Caco-2 (cell line): ENCODE measurements at regions of chr1 and their contacts with region 1.

Region 1: GRCh38 chr1:61453111-61453961 is 271.6 kb downstream of the TM2D1 start:
- DNase-seq: peak; percentile 76 to 77
- H3K4me3 ChIP-seq: no peak overlapping the region
- H3K4me3 Mint-ChIP-seq: no peak overlapping the region
- H3K27ac Mint-ChIP-seq: peak overlapping the region; percentile 42
- H3K4me1 ChIP-seq: peaks cover 32% of the 10 kb centered on the region
- H3K4me1 Mint-ChIP-seq: peaks cover 13% of the 10 kb centered on the region
- H3K27me3 ChIP-seq: no peaks in the 10 kb centered on the region
- H3K27me3 Mint-ChIP-seq: no peaks in the 10 kb centered on the region
- CTCF ChIP-seq: peak; percentile 56 to 77

Region 2: GRCh38 chr1:60969971-60970509 is 483.3 kb before region 1 on chr1:
- CTCF ChIA-PET with region 1: no interaction called
- POLR2A ChIA-PET with region 1: no interaction called
- intact Hi-C with region 1: loop called (anchors 2 kb)
- DNase-seq: no peak
- H3K4me3 ChIP-seq: no peak overlapping the region
- H3K4me3 Mint-ChIP-seq: no peak overlapping the region
- H3K27ac Mint-ChIP-seq: no peak overlapping the region
- H3K4me1 ChIP-seq: no peaks in the 10 kb centered on the region
- H3K4me1 Mint-ChIP-seq: no peaks in the 10 kb centered on the region
- H3K27me3 ChIP-seq: no peaks in the 10 kb centered on the region
- H3K27me3 Mint-ChIP-seq: peaks cover 9% of the 10 kb centered on the region
- CTCF ChIP-seq: no peak

Region 3: DNA sequence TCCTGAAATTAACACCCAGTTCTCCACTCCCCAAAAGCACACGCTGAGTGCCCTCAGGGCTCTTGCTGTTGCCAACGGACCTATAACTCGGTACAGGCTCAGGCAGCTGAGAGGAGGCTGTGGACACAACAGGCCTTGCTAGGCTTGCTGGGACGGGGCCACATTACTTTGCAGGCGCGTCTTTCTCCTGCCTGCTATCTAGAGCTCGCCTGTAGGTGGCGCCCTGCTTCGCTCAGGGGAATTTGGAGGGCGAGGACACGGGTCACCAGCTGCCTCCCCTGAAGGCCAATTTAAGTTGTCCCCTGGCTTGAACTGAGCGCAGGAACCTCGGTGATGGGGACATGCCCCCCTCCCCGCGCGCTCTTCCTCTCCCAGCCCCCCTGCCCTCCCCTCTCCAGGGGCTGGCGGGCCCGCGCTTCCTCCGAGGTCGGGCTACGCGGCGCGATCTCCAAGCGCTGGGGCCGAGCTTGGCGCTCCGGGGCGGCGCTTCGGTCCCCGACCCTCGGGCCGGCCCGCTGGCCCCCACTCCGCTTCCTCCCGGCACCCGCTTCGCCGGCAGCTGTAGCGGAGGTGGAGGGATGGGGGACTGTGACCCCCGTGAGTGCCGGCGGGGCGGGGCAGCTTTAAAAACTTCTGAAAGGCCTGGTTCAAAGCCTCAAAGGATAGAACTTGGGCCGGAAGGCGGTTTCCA is 403.3 kb before region 1 on chr1:
- CTCF ChIA-PET with region 1: interaction called, 6 read pairs
- POLR2A ChIA-PET with region 1: no interaction called
- intact Hi-C with region 1: loop called (anchors 2 kb)
- DNase-seq: peak; percentile 77 to 81
- H3K4me3 ChIP-seq: peak overlapping the region; percentile 40
- H3K4me3 Mint-ChIP-seq: peak overlapping the region; percentile 65
- H3K27ac Mint-ChIP-seq: no peak overlapping the region
- H3K4me1 ChIP-seq: no peaks in the 10 kb centered on the region
- H3K4me1 Mint-ChIP-seq: no peaks in the 10 kb centered on the region
- H3K27me3 ChIP-seq: no peaks in the 10 kb centered on the region
- H3K27me3 Mint-ChIP-seq: peaks cover 7% of the 10 kb centered on the region
- CTCF ChIP-seq: peak; percentile 77

Region 4: DNA sequence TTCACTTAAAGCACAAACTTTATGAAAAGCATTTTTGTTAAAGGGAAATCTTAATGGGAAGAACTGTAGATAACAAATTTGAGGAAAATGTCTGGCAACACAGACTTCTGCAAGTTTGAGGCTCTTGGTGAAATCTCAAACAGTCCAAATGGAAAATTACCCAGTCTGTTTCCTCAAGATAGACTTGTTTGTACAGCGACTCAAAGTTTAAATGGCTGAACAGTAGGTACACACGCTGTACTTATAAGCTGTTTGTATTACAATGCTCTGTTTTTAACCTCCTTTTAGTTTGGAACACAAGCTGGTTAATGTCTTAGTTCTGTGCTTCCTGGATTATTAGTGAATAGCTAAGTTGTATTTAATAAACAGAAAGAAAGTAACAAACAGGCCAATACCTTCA is 153.9 kb before region 1 on chr1:
- CTCF ChIA-PET with region 1: no interaction called
- POLR2A ChIA-PET with region 1: no interaction called
- intact Hi-C with region 1: loop called (anchors 5 kb)
- DNase-seq: peak in 1 of 2 experiments; percentile 2
- H3K4me3 ChIP-seq: no peak overlapping the region
- H3K4me3 Mint-ChIP-seq: no peak overlapping the region
- H3K27ac Mint-ChIP-seq: no peak overlapping the region
- H3K4me1 ChIP-seq: 0 out of 2 replicates have a peak, but pooled peaks cover 10% of the 10 kb centered on the region
- H3K4me1 Mint-ChIP-seq: no peaks in the 10 kb centered on the region
- H3K27me3 ChIP-seq: no peaks in the 10 kb centered on the region
- H3K27me3 Mint-ChIP-seq: no peaks in the 10 kb centered on the region
- CTCF ChIP-seq: no peak

Region 5: GRCh38 chr1:61337981-61338848 is 115.1 kb before region 1 on chr1:
- CTCF ChIA-PET with region 1: no interaction called
- POLR2A ChIA-PET with region 1: no interaction called
- intact Hi-C with region 1: loop called (anchors 1 kb)
- DNase-seq: peak; percentile 36 to 48
- H3K4me3 ChIP-seq: no peak overlapping the region
- H3K4me3 Mint-ChIP-seq: peak overlapping the region; percentile 50
- H3K27ac Mint-ChIP-seq: no peak overlapping the region
- H3K4me1 ChIP-seq: peaks cover 12% of the 10 kb centered on the region
- H3K4me1 Mint-ChIP-seq: peaks cover 8% of the 10 kb centered on the region
- H3K27me3 ChIP-seq: no peaks in the 10 kb centered on the region
- H3K27me3 Mint-ChIP-seq: no peaks in the 10 kb centered on the region
- CTCF ChIP-seq: peak; percentile 33 to 43

Region 6: GRCh38 chr1:61397935-61398334 is 55.4 kb before region 1 on chr1:
- CTCF ChIA-PET with region 1: no interaction called
- POLR2A ChIA-PET with region 1: no interaction called
- intact Hi-C with region 1: loop called (anchors 5 kb)
- DNase-seq: no peak
- H3K4me3 ChIP-seq: no peak overlapping the region
- H3K4me3 Mint-ChIP-seq: no peak overlapping the region
- H3K27ac Mint-ChIP-seq: no peak overlapping the region
- H3K4me1 ChIP-seq: no peaks in the 10 kb centered on the region
- H3K4me1 Mint-ChIP-seq: no peaks in the 10 kb centered on the region
- H3K27me3 ChIP-seq: no peaks in the 10 kb centered on the region
- H3K27me3 Mint-ChIP-seq: no peaks in the 10 kb centered on the region
- CTCF ChIP-seq: no peak

Region 7: DNA sequence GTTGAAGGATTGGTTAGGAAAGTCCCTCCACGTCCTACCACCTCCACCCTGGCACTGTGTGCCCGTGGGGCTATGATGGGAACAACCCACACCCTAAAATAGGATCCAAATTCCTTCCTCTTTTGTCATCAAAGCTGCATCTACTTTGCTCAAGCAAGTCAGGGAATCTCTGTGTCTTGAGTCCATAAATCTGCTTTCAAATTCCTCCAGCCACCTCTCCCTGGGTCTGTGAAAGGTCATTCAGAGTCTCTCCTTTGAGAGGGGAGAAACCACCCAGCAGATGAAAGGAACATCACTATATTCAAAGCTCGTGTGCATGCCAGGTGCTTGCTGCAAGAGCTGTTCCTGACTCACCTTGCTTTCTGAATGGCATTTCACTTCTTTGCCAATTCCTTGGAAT is 28.0 kb after region 1 on chr1:
- CTCF ChIA-PET with region 1: no interaction called
- POLR2A ChIA-PET with region 1: no interaction called
- intact Hi-C with region 1: no loop called
- DNase-seq: no peak
- H3K4me3 ChIP-seq: no peak overlapping the region
- H3K4me3 Mint-ChIP-seq: no peak overlapping the region
- H3K27ac Mint-ChIP-seq: no peak overlapping the region
- H3K4me1 ChIP-seq: no peaks in the 10 kb centered on the region
- H3K4me1 Mint-ChIP-seq: no peaks in the 10 kb centered on the region
- H3K27me3 ChIP-seq: no peaks in the 10 kb centered on the region
- H3K27me3 Mint-ChIP-seq: peaks cover 4% of the 10 kb centered on the region
- CTCF ChIP-seq: no peak

Region 8: DNA sequence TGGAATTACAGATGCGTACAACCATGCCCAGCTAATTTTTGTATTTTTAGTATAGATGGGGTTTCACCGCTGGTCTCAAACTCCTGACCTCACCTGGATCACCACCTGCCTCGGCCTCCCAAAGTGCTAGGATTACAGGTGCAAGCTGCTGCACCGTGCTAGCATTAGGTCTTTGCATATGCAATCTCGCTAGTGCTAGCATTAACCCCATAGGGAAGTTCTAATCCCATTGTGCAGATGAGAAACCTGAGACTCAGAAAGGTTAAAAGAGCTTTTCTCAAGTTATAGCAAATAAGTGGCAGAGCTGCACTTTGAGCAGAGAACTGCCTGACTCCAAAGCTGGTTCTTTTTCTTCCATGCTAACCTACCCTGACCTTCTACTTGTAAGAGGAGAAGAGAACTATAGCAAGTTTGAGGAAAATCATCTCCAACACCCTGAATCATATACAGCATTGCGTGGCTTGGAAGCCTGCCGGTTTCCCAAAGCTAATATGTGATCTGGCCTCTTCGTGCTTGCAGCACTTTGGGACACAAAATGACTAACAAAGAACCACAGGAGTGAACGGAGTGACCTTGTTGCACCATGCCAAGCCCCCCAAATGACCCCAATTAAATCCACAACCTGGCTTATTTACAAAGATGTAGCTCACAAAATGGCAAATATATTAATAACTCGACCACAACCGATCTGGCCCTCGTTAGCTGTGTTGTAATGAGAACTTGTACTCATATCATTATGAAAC is 86.6 kb after region 1 on chr1:
- CTCF ChIA-PET with region 1: no interaction called
- POLR2A ChIA-PET with region 1: no interaction called
- intact Hi-C with region 1: no loop called
- DNase-seq: no peak
- H3K4me3 ChIP-seq: no peak overlapping the region
- H3K4me3 Mint-ChIP-seq: no peak overlapping the region
- H3K27ac Mint-ChIP-seq: no peak overlapping the region
- H3K4me1 ChIP-seq: no peaks in the 10 kb centered on the region
- H3K4me1 Mint-ChIP-seq: no peaks in the 10 kb centered on the region
- H3K27me3 ChIP-seq: no peaks in the 10 kb centered on the region
- H3K27me3 Mint-ChIP-seq: no peaks in the 10 kb centered on the region
- CTCF ChIP-seq: no peak

Region 9: GRCh38 chr1:61674221-61674620 is 220.9 kb after region 1 on chr1:
- CTCF ChIA-PET with region 1: no interaction called
- POLR2A ChIA-PET with region 1: no interaction called
- intact Hi-C with region 1: no loop called
- DNase-seq: no peak
- H3K4me3 ChIP-seq: no peak overlapping the region
- H3K4me3 Mint-ChIP-seq: no peak overlapping the region
- H3K27ac Mint-ChIP-seq: no peak overlapping the region
- H3K4me1 ChIP-seq: 0 out of 2 replicates have a peak, but pooled peaks cover 6% of the 10 kb centered on the region
- H3K4me1 Mint-ChIP-seq: no peaks in the 10 kb centered on the region
- H3K27me3 ChIP-seq: no peaks in the 10 kb centered on the region
- H3K27me3 Mint-ChIP-seq: no peaks in the 10 kb centered on the region
- CTCF ChIP-seq: no peak